RWPE1 (cell line): ENCODE measurements at regions of chr20 and their contacts with region 1.

Region 1: GRCh38 chr20:815914-816606 is 17.5 kb upstream of the FAM110A start:
- DNase-seq: peak; percentile 68
- H3K27ac ChIP-seq: no peak overlapping the region
- CTCF ChIP-seq: peak; percentile 99

Region 2: DNA sequence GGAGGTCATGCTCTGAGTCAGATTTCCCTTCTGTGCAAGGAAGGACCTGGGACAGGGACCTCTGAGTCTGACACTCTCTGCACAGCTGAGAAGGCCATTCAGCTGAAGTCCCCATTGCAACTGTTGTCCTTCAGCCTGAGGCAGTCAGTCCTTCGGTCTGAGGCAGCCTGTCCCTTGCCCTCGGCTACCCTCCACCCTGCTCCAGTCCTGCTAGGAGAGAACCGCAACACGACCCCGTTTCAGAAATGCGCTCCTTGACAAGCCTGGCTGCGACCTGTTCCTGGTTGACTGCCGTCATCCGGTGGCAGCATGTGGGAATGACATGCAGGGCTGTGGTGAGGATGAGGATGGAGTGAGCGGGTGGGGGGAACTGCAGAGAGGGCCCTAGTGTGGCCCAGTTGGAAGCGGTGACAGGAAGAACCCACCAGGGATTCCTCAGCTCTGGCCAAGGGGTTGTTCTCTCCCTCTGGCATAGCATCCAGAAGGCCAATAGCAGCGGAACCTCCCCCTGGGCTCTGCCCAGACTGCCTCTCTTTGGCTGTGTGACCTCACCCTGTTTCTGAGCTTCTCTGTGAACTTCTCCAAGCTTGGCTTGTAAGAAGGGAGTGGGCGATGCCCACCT is 140.4 kb after region 1 on chr20:
- CTCF ChIA-PET with region 1: interaction called, 71 read pairs
- POLR2A ChIA-PET with region 1: no interaction called
- DNase-seq: peak; percentile 84
- H3K27ac ChIP-seq: no peak overlapping the region
- CTCF ChIP-seq: peak; percentile 98